Heart left ventricle (tissue), 16 donors: ENCODE measurements at regions of chr12 and their contacts with region 1.

Region 1: GRCh38 chr12:86170051-86170450 is 86.1 kb downstream of the MGAT4C start:
- DNase-seq: no peak
- ATAC-seq: no peak
- H3K4me3 ChIP-seq: no peak overlapping the region
- H3K27ac ChIP-seq: no peak overlapping the region
- H3K4me1 ChIP-seq: no peaks in the 10 kb centered on the region
- H3K27me3 ChIP-seq: no peaks in the 10 kb centered on the region
- CTCF ChIP-seq: no peak
- POLR2A ChIP-seq: no peak

Region 2: DNA sequence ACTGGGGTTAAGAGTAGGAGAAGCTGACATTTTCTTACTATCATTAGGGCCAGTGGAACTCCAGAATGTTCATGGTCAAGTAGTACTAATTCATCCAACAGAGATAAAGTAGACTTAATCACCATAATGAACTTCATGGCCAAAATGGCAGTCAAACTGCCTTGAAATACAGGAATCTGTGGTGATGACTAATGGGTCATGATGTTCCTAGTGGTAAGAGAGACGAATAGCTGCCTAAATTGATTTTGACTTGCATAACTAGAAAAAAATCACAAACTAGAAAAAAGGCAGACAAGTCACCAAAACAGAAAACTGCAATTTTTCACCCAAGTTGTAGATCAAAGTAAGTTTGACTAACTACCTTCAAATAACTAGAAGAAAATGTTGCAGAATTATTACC is 52.3 kb before region 1 on chr12:
- intact Hi-C with region 1: loop called in 1 of 10 experiments (anchors 10 kb)
- DNase-seq: no peak
- ATAC-seq: no peak
- H3K4me3 ChIP-seq: no peak overlapping the region
- H3K27ac ChIP-seq: no peak overlapping the region
- H3K4me1 ChIP-seq: no peaks in the 10 kb centered on the region
- H3K27me3 ChIP-seq: no peaks in the 10 kb centered on the region
- CTCF ChIP-seq: no peak
- POLR2A ChIP-seq: no peak